Prostate gland (tissue), 2 donors: ENCODE measurements at regions of chr3 and their contacts with region 1.

Region 1: GRCh38 chr3:47009225-47010110 is 30.0 kb downstream of the NBEAL2 start:
- DNase-seq: peak; percentile 84
- H3K4me3 ChIP-seq: peak overlapping the region; percentile 36 to 48
- H3K27ac ChIP-seq: peak overlapping the region; percentile 70 to 80
- H3K4me1 ChIP-seq: no peaks in the 10 kb centered on the region
- H3K27me3 ChIP-seq: no peaks in the 10 kb centered on the region
- CTCF ChIP-seq: peak in 1 of 4 experiments; percentile 18
- POLR2A ChIP-seq: peak; percentile 74

Region 2: DNA sequence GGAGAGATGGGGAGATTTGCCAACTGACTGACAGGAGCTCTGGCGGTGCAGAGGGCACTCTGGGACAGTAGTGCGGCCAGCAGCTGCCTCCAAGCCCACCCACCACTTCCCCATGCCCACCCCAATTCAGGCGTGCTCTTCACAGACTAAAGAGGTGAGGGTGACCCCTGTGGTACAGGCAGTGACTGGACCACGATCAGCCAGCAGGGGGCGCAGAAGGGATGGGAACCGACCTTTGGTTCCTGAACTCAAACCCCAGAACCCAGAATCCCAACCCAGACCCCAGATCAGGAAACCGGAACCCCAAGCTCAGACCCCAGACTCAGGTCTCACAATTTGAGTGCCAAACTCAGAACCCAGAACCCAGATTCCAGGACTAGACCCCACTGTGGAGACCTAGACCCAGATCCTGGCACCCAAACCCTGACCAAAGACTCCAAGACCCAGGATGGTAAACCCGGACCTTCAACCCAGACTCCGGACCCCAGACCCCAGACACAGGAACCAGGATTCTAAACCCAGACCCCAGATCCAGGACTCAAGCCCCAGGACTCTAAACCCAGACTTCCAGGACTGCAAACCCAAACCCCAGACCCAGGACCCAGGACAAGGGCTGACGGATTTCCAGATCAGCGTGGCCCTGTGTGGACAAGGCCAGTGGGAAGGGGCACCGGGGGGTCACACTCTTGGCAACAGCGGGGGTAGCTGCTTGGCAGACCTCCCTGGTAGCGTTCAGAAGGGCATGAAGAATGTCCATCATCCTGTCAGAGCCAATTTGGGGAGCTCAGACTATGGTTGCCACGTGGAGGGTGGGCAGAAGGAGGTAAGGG is 142.5 kb before region 1 on chr3:
- intact Hi-C with region 1: loop called (anchors 5 kb)
- DNase-seq: peak; percentile 42
- H3K4me3 ChIP-seq: no peak overlapping the region
- H3K27ac ChIP-seq: peak overlapping the region in 1 of 2 donors; percentile 42
- H3K4me1 ChIP-seq: peaks cover 9% of the 10 kb centered on the region
- H3K27me3 ChIP-seq: no peaks in the 10 kb centered on the region
- CTCF ChIP-seq: peak; percentile 76 to 82 (median 79)
- POLR2A ChIP-seq: no peak

Region 3: DNA sequence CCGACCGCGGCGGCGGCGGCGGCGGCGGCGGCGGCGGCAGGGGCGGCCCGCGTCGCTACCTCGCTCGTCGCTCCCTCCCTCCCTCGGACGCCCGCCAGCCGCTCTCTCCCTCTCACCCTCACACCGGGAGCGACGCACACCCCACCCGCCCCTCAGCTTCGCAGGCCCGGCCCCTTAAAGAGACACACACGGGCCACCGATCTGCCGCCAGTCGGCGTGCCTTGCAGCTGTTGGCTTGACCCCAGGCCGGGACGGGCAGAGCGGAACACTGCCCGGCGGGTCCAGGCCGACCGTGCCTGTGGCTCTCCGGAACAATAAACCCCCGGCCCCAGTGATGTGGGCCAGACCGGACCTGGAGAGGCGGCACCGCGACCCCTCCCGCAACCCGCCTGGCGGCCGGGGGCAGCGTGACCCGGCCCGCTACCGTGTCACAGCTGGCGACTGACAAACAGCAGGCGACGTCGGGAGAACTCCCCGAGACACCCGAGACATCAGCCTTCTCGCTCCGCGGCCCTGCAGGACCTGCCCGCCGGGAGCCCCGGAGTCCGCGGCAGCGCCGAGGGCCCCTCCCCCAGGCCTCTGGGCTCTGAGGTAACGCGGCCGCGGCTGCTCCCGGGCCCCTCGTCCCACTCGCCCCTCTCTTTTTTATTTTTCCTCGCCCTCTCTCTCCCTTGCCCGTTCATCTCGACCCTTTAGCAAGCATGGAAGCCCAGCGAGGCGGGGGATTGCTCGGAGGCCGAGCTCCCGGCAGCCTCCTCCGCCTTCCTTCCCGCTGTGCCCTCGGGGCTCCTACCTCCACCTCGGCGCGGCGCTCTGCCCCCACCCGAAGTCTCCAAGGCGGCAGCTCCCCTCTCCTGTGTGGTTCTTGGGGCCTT is 154.8 kb after region 1 on chr3 and contains the start of gene SETD2:
- intact Hi-C with region 1: loop called (anchors 10 kb)
- DNase-seq: peak; percentile 95
- H3K4me3 ChIP-seq: peak within 1 kb of the TSS; percentile 77 to 88
- H3K27ac ChIP-seq: peak within 1 kb of the TSS; percentile 95 to 96
- H3K4me1 ChIP-seq: peaks cover 4% of the 10 kb centered on the region
- H3K27me3 ChIP-seq: no peaks in the 10 kb centered on the region
- CTCF ChIP-seq: peak in 3 of 4 experiments; percentile 34 to 67 (median 59)
- POLR2A ChIP-seq: peak; percentile 58
- total RNA-seq, gene SETD2: 49.8 to 56.2 TPM

Region 4: GRCh38 chr3:47282424-47283192 is 273.1 kb after region 1 on chr3 and contains the starts of genes KIF9 and KLHL18:
- intact Hi-C with region 1: loop called (anchors 1 kb)
- DNase-seq: peak; percentile 93
- H3K4me3 ChIP-seq: peak within 1 kb of the TSS; percentile 55 to 68
- H3K27ac ChIP-seq: peak within 1 kb of the TSS; percentile 94 to 96
- H3K4me1 ChIP-seq: no peaks in the 10 kb centered on the region
- H3K27me3 ChIP-seq: no peaks in the 10 kb centered on the region
- CTCF ChIP-seq: peak in 2 of 4 experiments; percentile 21 to 22
- POLR2A ChIP-seq: peak; percentile 11
- total RNA-seq, gene KIF9: 14.3 to 17.5 TPM
- total RNA-seq, gene KLHL18: 10.8 to 18.6 TPM

Region 5: GRCh38 chr3:47324278-47324865 is 314.9 kb after region 1 on chr3:
- intact Hi-C with region 1: loop called (anchors 10 kb)
- DNase-seq: peak; percentile 56
- H3K4me3 ChIP-seq: no peak overlapping the region
- H3K27ac ChIP-seq: no peak overlapping the region
- H3K4me1 ChIP-seq: no peaks in the 10 kb centered on the region
- H3K27me3 ChIP-seq: no peaks in the 10 kb centered on the region
- CTCF ChIP-seq: peak; percentile 19 to 77 (median 59)
- POLR2A ChIP-seq: no peak